Colonic mucosa (tissue), 4 donors: ENCODE measurements at regions of chr17 and their contacts with region 1.

Region 1: GRCh38 chr17:39845052-39845846 is 18.9 kb downstream of the IKZF3 start:
- DNase-seq: no peak
- H3K4me3 ChIP-seq: no peak overlapping the region
- H3K27ac ChIP-seq: no peak overlapping the region
- H3K4me1 ChIP-seq: no peaks in the 10 kb centered on the region
- H3K27me3 ChIP-seq: no peaks in the 10 kb centered on the region
- CTCF ChIP-seq: no peak

Region 2: GRCh38 chr17:39769974-39770587 is 75.2 kb before region 1 on chr17:
- intact Hi-C with region 1: loop called (anchors 10 kb)
- DNase-seq: no peak
- H3K4me3 ChIP-seq: no peak overlapping the region
- H3K27ac ChIP-seq: peak overlapping the region; percentile 36
- H3K4me1 ChIP-seq: no peaks in the 10 kb centered on the region
- H3K27me3 ChIP-seq: no peaks in the 10 kb centered on the region
- CTCF ChIP-seq: no peak

Region 3: DNA sequence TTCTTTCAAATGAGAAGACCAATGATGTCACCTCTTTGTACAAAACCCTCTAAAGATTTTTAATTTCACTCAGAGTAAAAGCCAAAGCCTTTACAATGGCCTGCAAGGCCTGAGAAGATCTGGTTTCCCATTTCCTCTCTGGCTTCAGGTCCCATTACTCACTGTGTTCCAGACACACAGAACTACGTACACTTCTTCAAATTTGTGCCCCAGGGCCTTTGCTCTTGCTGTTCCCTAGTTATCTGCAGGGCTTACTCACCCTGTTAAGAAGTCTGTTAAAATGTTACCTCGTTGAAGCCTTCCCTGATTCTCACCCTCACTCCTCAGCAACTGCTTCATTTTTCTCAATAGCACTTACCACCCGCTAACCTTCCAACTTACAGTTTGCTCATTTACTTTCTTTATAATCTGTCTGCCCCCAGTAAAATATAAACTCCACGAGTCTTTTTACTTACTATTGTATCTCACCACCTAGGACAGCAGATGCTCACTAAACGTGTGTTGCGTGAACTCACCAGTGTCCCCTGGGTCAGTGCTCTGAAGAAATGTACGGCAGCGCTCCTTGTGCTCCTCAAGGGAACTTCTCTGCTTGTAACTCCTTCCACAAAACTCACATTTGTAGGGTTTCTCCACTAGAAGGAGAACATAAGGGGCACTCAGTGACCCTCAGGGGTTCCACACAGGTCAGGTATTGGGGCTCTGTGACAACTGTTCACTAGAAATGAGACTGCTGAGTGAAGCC is 57.3 kb before region 1 on chr17:
- intact Hi-C with region 1: no loop called
- DNase-seq: no peak
- H3K4me3 ChIP-seq: no peak overlapping the region
- H3K27ac ChIP-seq: no peak overlapping the region
- H3K4me1 ChIP-seq: no peaks in the 10 kb centered on the region
- H3K27me3 ChIP-seq: no peaks in the 10 kb centered on the region
- CTCF ChIP-seq: no peak